ENCODE measurements at regions of chr7 and their contacts with region 1.

Region 1: DNA sequence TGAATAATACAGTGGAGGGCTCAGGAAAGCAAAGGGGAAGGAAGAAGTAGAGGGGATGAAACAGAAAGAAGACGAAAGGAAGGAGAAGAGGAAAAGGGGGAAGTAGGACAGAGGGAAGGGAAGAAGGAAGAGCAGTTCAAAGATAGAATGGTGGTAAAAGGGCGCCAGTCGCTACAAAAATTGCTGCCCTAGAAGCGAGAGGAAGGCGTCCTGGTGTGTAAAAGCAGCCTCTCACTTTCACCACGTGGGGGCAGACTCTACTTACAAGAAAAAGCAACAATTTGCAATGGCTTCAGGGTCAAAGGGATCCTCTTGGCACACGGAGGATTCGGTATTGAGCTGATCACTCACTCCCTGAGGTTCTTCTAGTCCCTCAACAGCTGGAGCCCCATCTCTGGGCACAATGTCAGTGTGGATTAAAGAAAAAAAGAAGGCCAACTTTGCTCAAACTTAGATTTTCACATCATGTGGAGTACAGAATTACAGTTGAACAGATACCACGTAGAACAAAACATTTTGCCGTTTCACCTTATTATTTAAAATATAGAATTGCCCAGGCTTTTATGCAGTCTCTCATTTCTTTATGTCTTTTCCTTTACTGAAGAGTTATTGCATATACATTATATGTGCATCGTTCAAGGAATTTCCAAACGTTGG is 31.4 kb upstream of the NPVF start:
- DNase-seq: peak in 2 of 3 donors; percentile 33 to 82
- ATAC-seq: peak; percentile 77 to 80
- H3K4me3 ChIP-seq: no peak overlapping the region
- H3K27ac ChIP-seq: no peak overlapping the region
- H3K4me1 ChIP-seq: no peaks in the 10 kb centered on the region
- H3K27me3 ChIP-seq: no peaks in the 10 kb centered on the region

Region 2: DNA sequence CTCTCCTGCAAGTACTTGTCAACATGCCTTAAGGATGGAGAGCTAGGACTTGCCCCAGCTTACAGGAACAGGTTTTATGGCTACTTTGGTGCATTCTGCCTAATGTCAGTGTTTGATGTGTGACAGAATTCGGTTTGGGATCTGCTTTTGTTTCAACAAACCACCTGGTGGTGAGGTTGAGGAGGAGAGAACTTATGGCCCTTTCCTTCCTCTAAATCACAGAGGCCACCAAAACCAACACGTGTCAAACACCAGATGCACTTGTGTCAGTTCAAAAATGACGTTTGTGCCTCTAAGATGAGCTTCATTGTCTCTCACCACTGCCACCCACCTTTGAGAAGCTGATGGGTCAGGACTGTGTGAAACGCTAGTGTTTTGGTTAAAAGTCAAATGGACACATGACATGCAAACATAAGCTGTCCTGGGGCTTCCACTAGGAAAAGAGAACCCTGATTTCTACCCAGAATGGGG is 363.6 kb before region 1 on chr7:
- intact Hi-C with region 1: no loop called
- DNase-seq: no peak
- ATAC-seq: no peak
- H3K4me3 ChIP-seq: no peak overlapping the region
- H3K27ac ChIP-seq: no peak overlapping the region
- H3K4me1 ChIP-seq: no peaks in the 10 kb centered on the region
- H3K27me3 ChIP-seq: no peaks in the 10 kb centered on the region

Region 3: DNA sequence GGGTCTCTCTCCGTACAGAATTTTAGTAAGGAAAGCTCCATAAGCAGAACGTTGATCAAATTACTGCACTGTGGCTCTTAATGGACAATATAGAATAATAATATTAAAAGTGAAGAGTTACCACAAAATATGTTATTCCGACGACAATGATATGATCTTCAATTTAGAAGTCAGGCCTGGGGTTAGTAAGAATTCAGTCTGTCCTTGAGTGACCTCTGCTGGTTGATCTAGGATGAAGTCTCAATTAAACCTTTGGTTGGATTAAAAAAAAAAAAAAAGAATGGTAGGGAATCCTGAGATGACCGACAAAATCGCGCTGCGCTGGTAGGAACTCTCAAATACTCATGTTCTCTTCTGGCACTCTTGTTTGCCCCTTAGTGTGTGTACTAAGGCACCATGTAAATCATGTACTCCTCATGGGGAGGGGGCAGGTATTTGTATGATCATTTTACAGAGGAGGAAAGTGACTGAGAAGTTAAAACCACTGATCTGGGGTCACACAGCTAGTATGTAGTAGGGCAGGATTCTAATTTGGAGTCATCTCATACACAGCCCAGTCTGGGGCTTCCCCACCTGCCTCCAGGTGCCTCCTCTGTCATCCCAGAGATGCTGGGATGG is 129.9 kb after region 1 on chr7:
- intact Hi-C with region 1: loop called (anchors 2 to 5 kb)
- DNase-seq: peak in 1 of 3 donors; percentile 45
- ATAC-seq: peak in 1 of 2 donors; percentile 41
- H3K4me3 ChIP-seq: no peak overlapping the region
- H3K27ac ChIP-seq: no peak overlapping the region
- H3K4me1 ChIP-seq: peaks cover 2% of the 10 kb centered on the region
- H3K27me3 ChIP-seq: no peaks in the 10 kb centered on the region

Region 4: GRCh38 chr7:25427721-25428120 is 168.0 kb after region 1 on chr7:
- intact Hi-C with region 1: no loop called
- DNase-seq: no peak
- ATAC-seq: no peak
- H3K4me3 ChIP-seq: no peak overlapping the region
- H3K27ac ChIP-seq: no peak overlapping the region
- H3K4me1 ChIP-seq: peaks cover 4% of the 10 kb centered on the region
- H3K27me3 ChIP-seq: no peaks in the 10 kb centered on the region

Region 5: GRCh38 chr7:25559581-25560367 is 300.1 kb after region 1 on chr7:
- intact Hi-C with region 1: loop called in 1 of 4 experiments (anchors 5 kb)
- DNase-seq: no peak
- ATAC-seq: no peak
- H3K4me3 ChIP-seq: no peak overlapping the region
- H3K27ac ChIP-seq: no peak overlapping the region
- H3K4me1 ChIP-seq: peaks cover 2% of the 10 kb centered on the region
- H3K27me3 ChIP-seq: no peaks in the 10 kb centered on the region

Region 6: DNA sequence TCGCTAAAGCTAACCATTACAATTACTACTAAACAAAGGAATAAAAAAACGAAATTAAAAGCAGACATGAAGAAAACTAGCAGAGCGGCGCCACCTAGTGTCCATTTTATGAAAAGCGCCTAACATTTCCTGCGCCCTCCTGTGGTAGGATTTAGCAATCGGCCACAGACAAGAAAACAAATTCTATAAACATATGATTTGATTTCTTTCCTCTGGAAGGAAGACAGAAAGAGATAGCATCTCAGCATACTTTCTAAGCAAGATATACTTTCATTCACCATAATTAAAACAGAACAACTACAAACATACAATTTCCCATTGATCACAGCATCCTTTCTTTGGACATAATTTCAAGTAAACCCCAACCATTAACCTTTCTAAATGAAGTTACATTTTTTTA is 306.2 kb after region 1 on chr7:
- intact Hi-C with region 1: loop called in 3 of 4 experiments (anchors 5 kb)
- DNase-seq: peak; percentile 29 to 81 (median 68)
- ATAC-seq: no peak
- H3K4me3 ChIP-seq: no peak overlapping the region
- H3K27ac ChIP-seq: no peak overlapping the region
- H3K4me1 ChIP-seq: peaks cover 2% of the 10 kb centered on the region
- H3K27me3 ChIP-seq: no peaks in the 10 kb centered on the region